ENCODE measurements at regions of chr7 and their contacts with region 1.

Region 1: DNA sequence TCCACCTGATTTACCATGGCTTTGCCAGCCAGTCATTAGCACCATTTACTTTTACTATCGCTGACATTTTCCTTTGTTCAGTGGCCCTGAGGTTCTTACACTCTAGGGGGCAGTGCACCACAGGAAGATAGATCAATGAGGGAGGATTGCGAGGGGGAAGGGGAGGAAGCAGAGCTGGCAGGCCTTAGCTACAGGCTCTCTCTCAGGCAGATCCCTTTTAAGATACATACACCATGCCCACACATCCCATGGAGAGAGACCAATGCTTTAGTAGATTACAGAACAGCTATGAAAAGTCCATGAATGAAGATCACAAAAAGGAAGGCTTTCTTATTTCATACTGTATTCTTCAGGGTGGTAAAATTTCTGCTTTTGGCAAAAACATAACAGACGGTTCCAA is 47.4 kb downstream of the DENND11 start:
- DNase-seq: peak in 1 of 2 donors; percentile 28
- ATAC-seq: peak in 1 of 2 donors; percentile 64
- H3K4me3 ChIP-seq: no peak overlapping the region
- H3K27ac ChIP-seq: no peak overlapping the region
- H3K4me1 ChIP-seq: peaks cover 3 to 8% of the 10 kb centered on the region in 2 donors
- H3K27me3 ChIP-seq: no peaks in the 10 kb centered on the region
- CTCF ChIP-seq: peak; percentile 33 to 59 (median 40)
- POLR2A ChIP-seq: no peak

Region 2: DNA sequence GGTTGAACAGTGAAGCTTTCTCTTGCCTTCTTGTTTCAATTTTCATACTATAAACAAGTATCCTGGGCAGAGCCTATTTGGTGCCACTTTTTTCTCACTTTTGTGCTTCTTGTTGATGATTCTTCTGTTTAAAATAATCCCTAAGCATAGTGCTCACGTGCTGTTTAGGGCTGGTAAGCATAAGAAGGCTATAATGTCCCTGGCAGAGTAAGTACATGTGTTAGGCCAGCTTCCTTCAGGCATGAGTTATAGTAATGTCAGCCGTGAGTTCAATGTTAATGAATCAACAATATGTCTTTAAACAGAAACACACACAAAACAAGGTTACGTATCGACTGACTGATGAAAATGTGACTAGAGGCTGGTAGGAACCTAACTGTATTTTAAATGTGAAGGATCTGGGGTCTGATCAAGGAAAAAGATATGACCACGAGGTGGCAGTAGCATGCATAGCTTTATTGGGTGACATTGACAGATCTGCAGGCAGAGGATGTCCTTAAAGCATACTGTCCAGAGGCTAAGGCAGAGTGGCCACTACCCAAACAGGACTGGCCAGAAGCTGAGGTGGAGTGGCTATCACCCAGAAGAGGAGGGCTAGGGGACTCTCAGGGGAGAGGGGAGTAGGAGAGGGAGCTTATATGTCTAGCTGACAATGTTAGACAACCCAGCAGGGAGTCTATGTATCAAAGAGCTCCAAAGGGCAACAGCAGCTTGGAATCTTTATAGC is 843.6 kb before region 1 on chr7:
- in situ Hi-C with region 1: no loop called
- intact Hi-C with region 1: loop called (anchors 5 kb)
- DNase-seq: peak; percentile 18 to 41
- ATAC-seq: peak; percentile 93 to 97
- H3K4me3 ChIP-seq: no peak overlapping the region
- H3K27ac ChIP-seq: no peak overlapping the region
- H3K4me1 ChIP-seq: no peaks in the 10 kb centered on the region
- H3K27me3 ChIP-seq: no peaks in the 10 kb centered on the region
- CTCF ChIP-seq: peak; percentile 53 to 78 (median 70)
- POLR2A ChIP-seq: no peak

Region 3: DNA sequence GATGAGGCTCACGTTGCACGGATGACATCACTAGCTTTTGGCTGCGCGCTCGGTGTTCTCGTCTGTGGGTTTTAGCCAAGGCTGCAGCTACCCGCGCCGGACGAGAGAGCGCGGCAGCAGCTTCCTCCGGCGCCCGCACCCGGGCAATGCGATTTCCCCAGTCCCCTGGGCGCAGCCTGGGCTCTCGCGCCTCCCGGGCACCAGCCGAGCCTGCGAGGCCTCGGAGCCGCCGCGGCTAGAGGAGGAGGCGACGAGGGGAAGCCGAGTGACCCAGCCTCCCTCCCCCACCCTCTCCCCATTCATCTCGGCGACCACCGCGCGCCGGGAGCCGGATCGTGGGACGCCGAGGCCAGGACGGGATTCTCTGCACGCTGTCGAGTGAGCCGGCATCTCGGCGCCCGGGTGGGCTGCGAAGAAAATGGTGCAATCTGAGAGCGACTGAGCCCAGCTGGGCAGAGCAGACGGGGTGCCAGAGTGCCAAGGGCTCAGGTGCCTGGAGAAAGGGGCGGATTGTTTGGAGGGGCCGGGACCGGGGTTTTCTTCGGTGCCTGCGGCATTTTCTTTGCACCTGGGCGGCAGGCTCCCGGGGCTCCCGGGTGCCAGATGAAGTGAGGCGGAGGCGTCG is 581.9 kb before region 1 on chr7:
- in situ Hi-C with region 1: no loop called
- intact Hi-C with region 1: loop called (anchors 10 kb)
- DNase-seq: peak; percentile 46 to 69
- ATAC-seq: peak; percentile 86 to 91
- H3K4me3 ChIP-seq: peak overlapping the region; percentile 69 to 76 (median 71)
- H3K27ac ChIP-seq: peak overlapping the region; percentile 65 to 81 (median 76)
- H3K4me1 ChIP-seq: peaks cover 14 to 45% of the 10 kb centered on the region in 2 donors
- H3K27me3 ChIP-seq: peaks cover 0 to 3% (median 0%) of the 10 kb centered on the region in 3 donors
- CTCF ChIP-seq: no peak
- POLR2A ChIP-seq: peak; percentile 17 to 33

Region 4: GRCh38 chr7:141737834-141738591 is 83.5 kb after region 1 on chr7 and contains the start of gene SSBP1:
- in situ Hi-C with region 1: no loop called
- intact Hi-C with region 1: loop called (anchors 1 kb)
- DNase-seq: peak; percentile 85 to 88
- ATAC-seq: peak; percentile 98 to 99
- H3K4me3 ChIP-seq: peak within 1 kb of the TSS; percentile 74 to 97 (median 84)
- H3K27ac ChIP-seq: peak within 1 kb of the TSS; percentile 81 to 87 (median 84)
- H3K4me1 ChIP-seq: peaks cover 15 to 18% of the 10 kb centered on the region in 2 donors
- H3K27me3 ChIP-seq: no peaks in the 10 kb centered on the region
- CTCF ChIP-seq: peak; percentile 68 to 80 (median 76)
- POLR2A ChIP-seq: peak; percentile 57 to 67
- total RNA-seq, gene SSBP1: 127 to 147 (median 138) TPM